Activated CD4-positive, alpha-beta T cell treated with anti-CD3 and anti-CD28 coated beads for 36 hours (primary cell): ENCODE measurements at regions of chr17 and their contacts with region 1.

Region 1: DNA sequence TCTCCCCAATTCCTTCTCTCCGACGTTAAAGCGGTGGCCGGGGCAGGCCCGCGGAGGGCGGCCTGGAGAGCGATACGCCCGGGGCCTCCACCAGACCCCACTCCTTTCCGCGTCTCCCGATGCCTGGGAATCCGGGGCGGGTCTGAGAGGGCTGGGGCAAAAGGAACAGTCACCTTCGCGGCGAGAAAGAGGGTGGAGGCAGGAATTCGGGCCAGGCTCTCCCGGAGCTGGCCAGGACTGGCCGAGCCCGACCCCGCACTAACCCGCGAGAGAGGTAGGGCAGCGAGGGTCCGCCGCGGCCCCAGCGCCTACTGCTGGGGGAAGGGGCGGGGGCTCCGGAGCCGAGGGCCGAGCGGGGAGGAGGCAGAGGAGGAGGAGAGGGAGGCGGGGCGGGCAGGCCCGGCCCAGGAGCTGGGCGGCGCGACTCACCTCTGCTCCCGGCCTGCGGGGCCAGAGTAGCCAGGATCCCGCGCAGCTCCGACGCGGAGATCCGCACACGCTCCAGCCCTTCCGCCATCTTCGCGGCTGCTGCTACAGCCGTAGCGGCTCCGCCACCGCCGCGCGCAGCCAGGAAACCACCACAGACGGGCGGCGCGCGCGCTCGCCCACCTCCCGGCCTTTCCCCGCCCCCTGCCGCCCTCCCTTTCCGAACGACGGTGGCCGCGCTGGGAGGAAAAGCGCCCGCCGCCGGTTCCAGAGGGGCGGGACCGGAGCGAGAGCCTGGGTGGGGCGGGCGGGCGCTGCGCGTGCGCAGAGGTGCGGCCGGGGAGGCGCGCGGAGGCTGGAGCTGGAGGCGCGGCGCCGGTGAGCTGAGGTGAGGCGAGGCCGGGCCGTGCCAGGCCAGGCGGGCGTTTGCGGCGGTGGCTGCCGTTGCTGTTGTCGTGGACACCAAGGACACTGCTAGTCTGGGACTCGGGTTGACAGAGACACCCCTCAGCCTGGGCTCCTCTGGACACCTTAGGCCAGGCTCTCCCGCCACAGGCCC is at the starts of genes SMG6 and SRR:
- DNase-seq: peak; percentile 98
- ATAC-seq: peak; percentile 89
- H3K4me3 Mint-ChIP-seq: peak within 1 kb of the TSS; percentile 81
- H3K27ac Mint-ChIP-seq: peak within 1 kb of the TSS; percentile 61
- H3K4me1 Mint-ChIP-seq: peaks cover 46% of the 10 kb centered on the region
- H3K27me3 Mint-ChIP-seq: no peaks in the 10 kb centered on the region
- total RNA-seq, gene SMG6: 28.5 to 31.4 TPM
- total RNA-seq, gene SRR: 15.4 to 18.3 TPM

Region 2: DNA sequence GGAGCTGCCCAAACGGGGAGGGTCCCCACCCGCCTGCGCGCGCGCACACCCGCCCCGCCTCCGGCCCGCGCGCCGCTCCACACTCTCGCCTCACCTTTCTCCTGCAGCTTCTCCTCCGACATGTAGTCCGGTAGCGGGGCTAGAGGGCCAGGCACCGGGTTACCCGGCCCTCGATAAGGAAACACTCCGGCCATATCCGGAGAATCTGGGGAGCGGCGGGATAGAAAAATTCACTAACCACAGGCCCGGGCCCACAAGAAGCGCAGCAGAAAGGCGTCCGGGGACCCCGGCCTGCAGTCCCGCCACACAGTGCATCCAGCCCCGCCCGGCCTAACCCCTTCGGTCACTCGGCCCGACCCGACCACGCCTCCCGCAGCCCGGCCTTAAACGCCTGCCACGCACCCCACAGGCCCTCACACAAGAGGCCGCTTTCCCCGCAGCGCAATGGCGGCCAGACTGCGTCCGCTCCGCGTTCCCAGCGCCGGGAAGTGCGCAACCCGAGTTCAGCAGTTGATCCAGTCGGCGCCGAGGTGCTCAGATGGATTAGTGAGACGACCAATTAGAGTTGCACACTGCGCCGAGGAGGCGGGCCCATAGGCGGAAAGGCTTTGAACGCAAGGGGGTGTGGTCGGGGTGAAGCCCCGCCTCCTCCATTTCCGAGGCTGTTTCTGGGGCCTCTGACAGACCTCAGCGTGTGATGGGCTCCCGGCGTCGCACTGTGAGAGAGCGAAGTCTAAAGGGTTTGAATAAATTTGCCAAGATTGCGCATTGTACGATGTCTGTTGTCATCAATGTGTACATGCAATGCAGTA is 618.9 kb before region 1 on chr17 and contains the start of gene PRPF8:
- CTCF ChIA-PET with region 1: no interaction called
- POLR2A ChIA-PET with region 1: no interaction called
- intact Hi-C with region 1: loop called in 1 of 2 experiments (anchors 1 kb)
- DNase-seq: peak; percentile 99
- ATAC-seq: peak; percentile 100
- H3K4me3 Mint-ChIP-seq: peak within 1 kb of the TSS; percentile 98
- H3K27ac Mint-ChIP-seq: peak within 1 kb of the TSS; percentile 93
- H3K4me1 Mint-ChIP-seq: peaks cover 34% of the 10 kb centered on the region
- H3K27me3 Mint-ChIP-seq: no peaks in the 10 kb centered on the region
- total RNA-seq, gene PRPF8: 391 to 425 TPM

Region 3: DNA sequence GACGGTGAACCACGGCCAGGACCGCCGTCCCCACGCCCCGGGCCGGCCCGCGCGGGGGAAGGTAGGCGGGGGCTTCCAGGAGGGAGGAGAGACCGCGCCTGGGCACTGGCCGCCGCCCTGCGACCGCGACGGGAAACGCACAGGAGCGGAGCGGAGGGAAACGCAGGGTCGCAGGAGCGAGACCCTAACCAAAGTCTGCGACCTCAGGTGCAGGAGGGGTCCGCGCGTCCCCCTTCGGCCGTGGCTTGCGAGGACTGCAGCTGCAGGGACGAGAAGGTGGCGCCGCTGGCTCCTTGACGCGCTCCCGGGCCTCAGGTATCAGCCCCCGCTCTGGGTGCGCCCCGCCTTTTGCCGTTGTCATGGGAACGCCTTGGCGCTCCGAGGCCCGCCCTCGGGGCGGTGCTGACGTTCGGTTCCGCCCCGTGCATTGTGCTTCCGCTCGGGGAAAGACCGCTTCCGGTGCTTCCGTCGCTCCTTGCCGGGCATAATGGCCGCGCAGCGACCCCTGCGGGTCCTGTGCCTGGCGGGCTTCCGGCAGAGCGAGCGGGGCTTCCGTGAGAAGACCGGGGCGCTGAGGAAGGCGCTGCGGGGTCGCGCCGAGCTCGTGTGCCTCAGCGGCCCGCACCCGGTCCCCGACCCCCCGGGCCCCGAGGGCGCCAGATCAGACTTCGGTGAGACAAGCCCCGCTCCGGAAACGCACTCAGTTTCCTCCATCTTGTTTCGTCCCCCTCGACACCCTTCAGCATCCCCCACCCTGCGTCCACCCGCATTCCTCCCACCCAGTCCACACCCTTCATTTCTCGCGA is 261.7 kb before region 1 on chr17 and contains the start of gene OVCA2:
- CTCF ChIA-PET with region 1: no interaction called
- POLR2A ChIA-PET with region 1: no interaction called
- intact Hi-C with region 1: loop called in 1 of 2 experiments (anchors 1 kb)
- DNase-seq: peak; percentile 99
- ATAC-seq: peak; percentile 92
- H3K4me3 Mint-ChIP-seq: peak within 1 kb of the TSS; percentile 95
- H3K27ac Mint-ChIP-seq: peak within 1 kb of the TSS; percentile 95
- H3K4me1 Mint-ChIP-seq: peaks cover 23% of the 10 kb centered on the region
- H3K27me3 Mint-ChIP-seq: no peaks in the 10 kb centered on the region
- total RNA-seq, gene OVCA2: 31.4 to 38.6 TPM

Region 4: GRCh38 chr17:2172077-2172851 is 131.2 kb before region 1 on chr17:
- CTCF ChIA-PET with region 1: interaction called, 4 read pairs
- POLR2A ChIA-PET with region 1: interaction called, 11 read pairs
- intact Hi-C with region 1: no loop called
- DNase-seq: no peak
- ATAC-seq: no peak
- H3K4me3 Mint-ChIP-seq: no peak overlapping the region
- H3K27ac Mint-ChIP-seq: no peak overlapping the region
- H3K4me1 Mint-ChIP-seq: no peaks in the 10 kb centered on the region
- H3K27me3 Mint-ChIP-seq: no peaks in the 10 kb centered on the region

Region 5: GRCh38 chr17:2336215-2336851 is 32.8 kb after region 1 on chr17 and contains the start of gene TSR1:
- CTCF ChIA-PET with region 1: interaction called, 4 read pairs
- POLR2A ChIA-PET with region 1: interaction called, 10 read pairs
- intact Hi-C with region 1: loop called (anchors 1 to 2 kb)
- DNase-seq: peak; percentile 94
- ATAC-seq: peak; percentile 93
- H3K4me3 Mint-ChIP-seq: no peak within 1 kb of the TSS
- H3K27ac Mint-ChIP-seq: peak within 1 kb of the TSS; percentile 99
- H3K4me1 Mint-ChIP-seq: peaks cover 14% of the 10 kb centered on the region
- H3K27me3 Mint-ChIP-seq: no peaks in the 10 kb centered on the region
- total RNA-seq, gene TSR1: 59.3 to 77.0 TPM

Region 6: DNA sequence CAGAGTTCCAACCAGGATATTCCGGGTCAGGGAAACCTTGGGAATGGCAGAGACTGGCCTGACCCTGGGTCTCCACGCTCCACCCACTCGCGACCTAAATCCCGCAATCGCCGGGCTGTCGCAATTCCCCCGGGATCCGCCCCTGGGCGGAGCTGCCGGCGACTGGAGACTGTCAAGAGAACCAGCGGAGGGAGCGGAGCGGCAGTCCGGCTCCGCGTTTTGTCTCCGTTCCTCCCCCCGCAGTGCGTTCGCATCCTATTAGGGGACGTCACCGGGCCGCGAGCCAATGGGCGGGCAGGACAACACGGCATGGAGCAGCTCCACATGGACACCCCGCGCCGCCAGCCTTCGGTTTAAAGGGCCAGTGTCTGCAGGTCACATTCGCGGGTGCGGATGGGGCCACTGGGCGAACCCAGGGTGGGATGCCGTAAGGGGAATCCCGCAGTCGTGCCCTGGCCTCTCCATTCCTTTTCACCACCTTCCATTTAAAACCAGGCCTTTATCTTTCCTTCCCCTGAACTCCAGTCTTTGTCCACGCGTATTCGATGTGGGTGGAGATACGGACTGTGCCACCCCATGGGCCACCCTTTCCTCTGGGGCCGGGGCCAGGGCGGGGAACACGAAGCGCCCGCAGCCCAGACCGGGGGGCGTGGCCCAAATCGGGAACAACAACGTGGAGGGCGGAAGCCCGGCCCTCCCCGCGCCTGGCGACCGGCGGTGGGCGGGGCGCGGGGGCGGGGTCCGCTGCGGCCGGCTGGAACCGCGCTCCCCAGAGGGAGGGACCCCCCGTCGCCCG is 98.1 kb after region 1 on chr17:
- CTCF ChIA-PET with region 1: interaction called, 3 read pairs
- POLR2A ChIA-PET with region 1: interaction called, 5 read pairs
- intact Hi-C with region 1: loop called in 1 of 2 experiments (anchors 1 kb)
- DNase-seq: peak; percentile 100
- ATAC-seq: peak; percentile 59
- H3K4me3 Mint-ChIP-seq: peak overlapping the region; percentile 88
- H3K27ac Mint-ChIP-seq: peak overlapping the region; percentile 99
- H3K4me1 Mint-ChIP-seq: peaks cover 43% of the 10 kb centered on the region
- H3K27me3 Mint-ChIP-seq: no peaks in the 10 kb centered on the region

Region 7: GRCh38 chr17:2500446-2500845 is 196.9 kb after region 1 on chr17:
- CTCF ChIA-PET with region 1: no interaction called
- POLR2A ChIA-PET with region 1: no interaction called
- intact Hi-C with region 1: no loop called
- DNase-seq: no peak
- ATAC-seq: no peak
- H3K4me3 Mint-ChIP-seq: no peak overlapping the region
- H3K27ac Mint-ChIP-seq: no peak overlapping the region
- H3K4me1 Mint-ChIP-seq: peaks cover 6% of the 10 kb centered on the region
- H3K27me3 Mint-ChIP-seq: no peaks in the 10 kb centered on the region

Region 8: DNA sequence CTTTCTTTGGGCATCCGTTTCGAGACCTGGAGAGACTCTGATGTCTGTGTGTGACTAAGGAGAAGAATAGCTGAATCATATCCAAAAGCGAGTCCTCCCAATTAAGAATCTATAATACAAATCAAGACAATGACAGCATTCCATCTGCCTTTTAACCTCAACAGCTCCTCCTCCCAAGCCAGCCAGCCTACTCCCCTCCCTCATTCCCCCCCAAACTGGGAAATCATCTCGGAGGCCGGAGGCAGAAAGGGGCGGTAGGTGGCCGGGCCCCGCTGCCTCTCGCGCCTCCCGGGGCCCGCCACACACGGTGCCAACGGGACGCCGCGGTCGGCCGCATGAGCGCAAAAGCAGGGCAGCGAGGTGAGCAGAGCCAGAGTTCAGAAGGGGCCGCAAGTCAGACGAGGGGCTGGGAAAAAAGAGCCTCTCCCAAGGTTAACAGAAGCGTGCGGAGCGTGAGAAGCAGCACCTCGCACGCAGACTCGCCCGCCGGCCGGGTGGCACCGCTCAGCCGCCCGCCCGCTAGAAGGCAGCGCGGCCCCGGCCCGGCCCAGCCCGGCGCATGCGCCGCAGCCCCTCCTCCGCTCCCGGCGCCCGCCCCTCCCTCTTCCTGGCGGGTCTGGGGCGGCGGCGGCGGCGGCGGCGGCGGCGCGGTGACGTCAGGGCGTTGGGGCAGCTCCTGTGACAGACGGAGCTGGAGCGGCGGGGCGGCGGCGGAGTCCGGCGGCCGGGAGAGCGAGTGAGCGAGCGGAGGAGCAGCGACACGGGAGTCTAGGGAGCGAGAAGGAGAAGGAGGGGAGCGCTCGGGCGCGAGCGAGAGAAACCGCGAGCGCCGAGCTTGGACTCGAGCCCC is 289.7 kb after region 1 on chr17 and contains the start of gene PAFAH1B1:
- CTCF ChIA-PET with region 1: no interaction called
- POLR2A ChIA-PET with region 1: no interaction called
- intact Hi-C with region 1: loop called in 1 of 2 experiments (anchors 1 kb)
- DNase-seq: peak; percentile 98
- ATAC-seq: peak; percentile 84
- H3K4me3 Mint-ChIP-seq: peak within 1 kb of the TSS; percentile 79
- H3K27ac Mint-ChIP-seq: peak within 1 kb of the TSS; percentile 88
- H3K4me1 Mint-ChIP-seq: peaks cover 25% of the 10 kb centered on the region
- H3K27me3 Mint-ChIP-seq: no peaks in the 10 kb centered on the region
- total RNA-seq, gene PAFAH1B1: 163 to 167 TPM

Region 9: DNA sequence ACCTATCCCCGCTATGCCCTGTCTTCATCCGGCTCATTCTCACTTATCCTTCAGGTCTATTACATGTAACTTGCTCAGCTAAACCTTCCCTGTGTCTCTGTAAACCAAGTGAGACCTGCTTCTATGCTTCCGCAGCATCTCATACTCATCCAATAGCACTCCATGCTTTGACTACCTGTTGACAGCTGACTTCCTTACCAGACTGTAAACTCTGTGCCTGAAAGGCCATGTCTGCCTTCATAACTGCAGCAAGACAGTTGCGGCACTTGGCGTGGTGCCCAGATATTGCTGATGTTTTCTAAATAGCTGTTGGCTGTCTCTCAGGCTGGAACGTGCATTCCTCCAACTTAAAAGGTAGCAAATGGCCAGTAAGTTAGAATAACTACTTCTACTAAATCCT is 1096.6 kb after region 1 on chr17:
- CTCF ChIA-PET with region 1: no interaction called
- POLR2A ChIA-PET with region 1: no interaction called
- intact Hi-C with region 1: no loop called
- DNase-seq: no peak
- ATAC-seq: no peak
- H3K4me3 Mint-ChIP-seq: no peak overlapping the region
- H3K27ac Mint-ChIP-seq: no peak overlapping the region
- H3K4me1 Mint-ChIP-seq: no peaks in the 10 kb centered on the region
- H3K27me3 Mint-ChIP-seq: peaks cover 13% of the 10 kb centered on the region